Esophagus muscularis mucosa (tissue), 4 donors: ENCODE measurements at regions of chr1 and their contacts with region 1.

Region 1: DNA sequence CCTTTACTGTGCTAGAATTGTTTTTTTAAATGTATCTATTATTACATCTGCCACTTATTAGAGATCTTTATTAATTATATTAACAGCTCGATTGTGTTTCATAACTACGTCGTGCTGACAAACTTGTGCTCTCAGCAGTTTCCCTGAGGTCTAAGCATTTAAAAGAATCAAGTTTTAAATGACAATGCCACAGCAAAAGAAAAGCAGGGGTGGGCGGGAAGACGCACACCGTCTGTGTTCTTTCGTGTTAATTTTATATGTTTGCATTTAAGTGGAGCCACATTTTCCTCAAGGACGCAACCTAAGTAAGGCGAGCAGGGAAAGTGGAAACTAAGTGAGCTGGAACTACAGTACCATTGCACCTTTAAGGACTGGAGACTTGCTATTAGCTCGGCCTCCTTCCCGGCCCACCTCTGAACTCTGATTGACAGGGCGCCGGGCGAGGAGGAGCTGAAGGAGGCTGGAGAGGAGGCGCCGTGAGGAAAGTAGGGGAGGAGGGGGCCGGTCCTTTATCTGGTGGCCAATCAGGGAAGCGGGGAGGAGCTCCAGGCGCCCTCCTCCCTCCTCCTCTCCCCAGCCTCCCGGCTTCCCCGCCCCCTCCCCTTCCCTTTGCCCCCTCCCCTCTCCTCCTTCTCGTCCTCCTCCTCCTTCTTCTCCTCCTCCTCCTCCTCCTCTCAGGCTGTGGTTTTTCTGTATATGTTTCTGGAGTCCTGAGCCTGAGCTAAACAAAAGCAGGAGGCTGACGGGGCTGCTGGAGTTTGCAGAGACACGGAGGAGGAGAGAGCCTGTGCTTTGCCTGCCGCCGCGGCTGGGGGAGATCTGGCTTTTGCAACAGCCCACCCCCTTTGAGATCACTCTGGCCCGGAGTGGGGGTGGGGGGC is at the start of gene PBX1:
- DNase-seq: peak; percentile 98
- H3K4me3 ChIP-seq: peak within 1 kb of the TSS; percentile 71 to 86 (median 78)
- H3K27ac ChIP-seq: peak within 1 kb of the TSS; percentile 84 to 90 (median 86)
- H3K4me1 ChIP-seq: peaks cover 7 to 11% (median 9%) of the 10 kb centered on the region in 4 donors
- H3K27me3 ChIP-seq: no peaks in the 10 kb centered on the region
- CTCF ChIP-seq: no peak
- EP300 ChIP-seq: no peak
- POLR2A ChIP-seq: peak; percentile 33
- total RNA-seq, gene PBX1: 89.6 to 138 (median 112) TPM

Region 2: GRCh38 chr1:164440232-164440631 is 118.5 kb before region 1 on chr1:
- intact Hi-C with region 1: loop called (anchors 10 kb)
- DNase-seq: no peak
- H3K4me3 ChIP-seq: no peak overlapping the region
- H3K27ac ChIP-seq: no peak overlapping the region
- H3K4me1 ChIP-seq: peaks cover 11 to 31% (median 27%) of the 10 kb centered on the region in 4 donors
- H3K27me3 ChIP-seq: no peaks in the 10 kb centered on the region
- CTCF ChIP-seq: peak; percentile 27 to 63 (median 38)
- EP300 ChIP-seq: no peak
- POLR2A ChIP-seq: no peak

Region 3: GRCh38 chr1:164617377-164618201 is 58.9 kb after region 1 on chr1:
- intact Hi-C with region 1: loop called (anchors 5 kb)
- DNase-seq: no peak
- H3K4me3 ChIP-seq: no peak overlapping the region
- H3K27ac ChIP-seq: peak overlapping the region; percentile 10 to 71 (median 60)
- H3K4me1 ChIP-seq: peaks cover 56 to 99% (median 98%) of the 10 kb centered on the region in 4 donors
- H3K27me3 ChIP-seq: no peaks in the 10 kb centered on the region
- CTCF ChIP-seq: peak; percentile 56 to 65 (median 62)
- EP300 ChIP-seq: no peak
- POLR2A ChIP-seq: no peak

Region 4: GRCh38 chr1:164707868-164708331 is 149.2 kb after region 1 on chr1:
- intact Hi-C with region 1: loop called (anchors 10 kb)
- DNase-seq: no peak
- H3K4me3 ChIP-seq: no peak overlapping the region
- H3K27ac ChIP-seq: peak overlapping the region; percentile 76 to 83 (median 80)
- H3K4me1 ChIP-seq: peaks cover 60 to 97% (median 93%) of the 10 kb centered on the region in 4 donors
- H3K27me3 ChIP-seq: no peaks in the 10 kb centered on the region
- CTCF ChIP-seq: no peak
- EP300 ChIP-seq: no peak
- POLR2A ChIP-seq: no peak

Region 5: GRCh38 chr1:164786980-164787833 is 228.5 kb after region 1 on chr1:
- intact Hi-C with region 1: loop called (anchors 5 kb)
- DNase-seq: peak; percentile 96
- H3K4me3 ChIP-seq: peak overlapping the region in 2 of 4 donors; percentile 8 to 26
- H3K27ac ChIP-seq: peak overlapping the region; percentile 78 to 81 (median 80)
- H3K4me1 ChIP-seq: peaks cover 45 to 97% (median 91%) of the 10 kb centered on the region in 4 donors
- H3K27me3 ChIP-seq: no peaks in the 10 kb centered on the region
- CTCF ChIP-seq: peak; percentile 92 to 93 (median 93)
- EP300 ChIP-seq: no peak
- POLR2A ChIP-seq: no peak

Region 6: GRCh38 chr1:164868990-164869389 is 310.3 kb after region 1 on chr1:
- intact Hi-C with region 1: no loop called
- DNase-seq: no peak
- H3K4me3 ChIP-seq: no peak overlapping the region
- H3K27ac ChIP-seq: no peak overlapping the region
- H3K4me1 ChIP-seq: peaks cover 0 to 14% (median 5%) of the 10 kb centered on the region in 4 donors
- H3K27me3 ChIP-seq: no peaks in the 10 kb centered on the region
- CTCF ChIP-seq: no peak
- EP300 ChIP-seq: no peak
- POLR2A ChIP-seq: no peak